Vagina (tissue), 2 donors: ENCODE measurements at regions of chr12 and their contacts with region 1.

Region 1: GRCh38 chr12:69392179-69392928 is 32.8 kb downstream of the YEATS4 start:
- DNase-seq: no peak
- H3K4me3 ChIP-seq: no peak overlapping the region
- H3K27ac ChIP-seq: no peak overlapping the region
- H3K4me1 ChIP-seq: no peaks in the 10 kb centered on the region
- H3K27me3 ChIP-seq: no peaks in the 10 kb centered on the region
- CTCF ChIP-seq: no peak
- POLR2A ChIP-seq: no peak

Region 2: GRCh38 chr12:69405466-69405865 is 13.1 kb after region 1 on chr12:
- intact Hi-C with region 1: no loop called
- DNase-seq: no peak
- H3K4me3 ChIP-seq: no peak overlapping the region
- H3K27ac ChIP-seq: no peak overlapping the region
- H3K4me1 ChIP-seq: no peaks in the 10 kb centered on the region
- H3K27me3 ChIP-seq: no peaks in the 10 kb centered on the region
- CTCF ChIP-seq: no peak
- POLR2A ChIP-seq: no peak

Region 3: DNA sequence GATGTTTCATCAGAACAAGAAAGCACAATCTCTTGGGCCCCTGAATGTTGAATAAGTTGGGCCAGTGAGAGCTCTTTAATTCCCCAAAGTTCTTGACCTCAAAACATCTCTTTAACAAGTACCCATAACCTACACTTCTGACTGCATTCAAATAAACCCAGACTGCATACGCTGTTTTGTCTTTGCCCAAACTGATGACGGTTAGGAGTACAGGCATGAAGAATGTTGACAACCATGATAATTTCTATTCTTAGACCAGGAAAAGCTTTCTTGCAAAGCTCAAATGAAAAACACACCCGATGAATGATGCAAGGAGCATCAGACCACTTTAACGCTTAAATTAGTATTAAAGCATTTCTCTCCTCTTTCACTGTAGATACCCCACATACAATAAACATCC is 334.6 kb after region 1 on chr12:
- intact Hi-C with region 1: loop called (anchors 5 kb)
- DNase-seq: no peak
- H3K4me3 ChIP-seq: no peak overlapping the region
- H3K27ac ChIP-seq: no peak overlapping the region
- H3K4me1 ChIP-seq: no peaks in the 10 kb centered on the region
- H3K27me3 ChIP-seq: no peaks in the 10 kb centered on the region
- CTCF ChIP-seq: no peak
- POLR2A ChIP-seq: no peak